Common myeloid progenitor, CD34-positive (primary cell): ENCODE measurements at regions of chr3 and their contacts with region 1.

Region 1: GRCh38 chr3:42190701-42191462 is 75.1 kb downstream of the CCK start:
- DNase-seq: peak; percentile 55 to 76 (median 67)
- H3K4me3 ChIP-seq: no peak overlapping the region
- H3K27ac ChIP-seq: no peak overlapping the region
- H3K4me1 ChIP-seq: peaks cover 4 to 28% (median 18%) of the 10 kb centered on the region in 4 experiments
- H3K27me3 ChIP-seq: no peaks in the 10 kb centered on the region

Region 2: DNA sequence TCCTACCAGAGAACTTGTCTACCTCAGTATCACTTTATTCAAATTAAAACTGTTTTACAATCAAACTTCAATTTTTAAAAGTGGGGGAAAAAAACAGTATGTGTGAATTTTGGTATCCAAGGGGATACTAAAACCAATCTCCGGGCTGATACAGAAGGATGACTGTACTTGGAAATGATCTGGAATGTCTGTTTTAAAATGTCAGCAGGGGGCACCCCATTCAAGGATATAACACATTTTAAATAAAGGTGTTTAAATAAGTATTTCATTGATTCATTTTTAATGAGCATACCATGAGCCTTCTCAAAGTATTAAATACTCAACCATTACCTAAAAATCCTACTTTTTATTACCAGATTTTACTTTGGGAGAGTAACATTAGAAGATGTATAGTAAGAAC is 296.9 kb before region 1 on chr3:
- CTCF ChIA-PET with region 1: interaction called, 17 read pairs
- POLR2A ChIA-PET with region 1: no interaction called
- DNase-seq: peak; percentile 42 to 75 (median 66)
- H3K4me3 ChIP-seq: no peak overlapping the region
- H3K27ac ChIP-seq: no peak overlapping the region
- H3K4me1 ChIP-seq: no peaks in the 10 kb centered on the region
- H3K27me3 ChIP-seq: no peaks in the 10 kb centered on the region

Region 3: DNA sequence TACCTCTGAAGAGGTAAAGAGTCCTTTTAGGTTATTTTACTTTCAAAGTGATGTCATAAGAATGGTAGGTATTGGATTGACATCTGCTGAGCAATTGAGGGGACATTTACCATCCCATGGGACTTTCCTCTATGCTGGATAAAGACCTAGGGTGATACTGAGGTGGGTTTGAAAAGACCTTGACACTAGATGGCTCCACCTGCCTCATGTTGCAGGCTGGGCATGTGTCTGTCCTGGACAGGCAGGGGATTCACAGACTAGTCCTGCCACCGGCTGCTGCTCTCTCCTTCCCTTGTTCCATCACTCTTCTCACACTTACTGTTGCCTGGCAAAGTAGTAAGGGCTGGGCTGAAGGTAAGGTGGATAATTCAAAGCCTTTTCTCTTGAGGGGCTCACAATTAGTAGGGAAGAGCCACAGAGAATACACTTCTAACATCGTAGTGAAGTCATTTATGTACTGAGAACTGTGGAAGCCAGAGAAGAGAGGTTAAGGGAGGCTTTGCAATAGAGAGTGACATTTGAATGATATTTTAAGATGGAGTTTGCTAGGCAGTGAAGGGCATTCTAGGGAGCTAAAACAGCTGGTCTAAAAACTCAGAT is 72.0 kb before region 1 on chr3:
- CTCF ChIA-PET with region 1: interaction called, 122 read pairs
- POLR2A ChIA-PET with region 1: no interaction called
- DNase-seq: peak; percentile 44 to 62 (median 62)
- H3K4me3 ChIP-seq: no peak overlapping the region
- H3K27ac ChIP-seq: peak overlapping the region in 1 of 2 experiments; percentile 11
- H3K4me1 ChIP-seq: peaks cover 6 to 44% (median 33%) of the 10 kb centered on the region in 4 experiments
- H3K27me3 ChIP-seq: no peaks in the 10 kb centered on the region

Region 4: GRCh38 chr3:42179110-42179725 is 11.7 kb before region 1 on chr3:
- CTCF ChIA-PET with region 1: interaction called, 47 read pairs
- POLR2A ChIA-PET with region 1: interaction called, 5 read pairs
- DNase-seq: no peak
- H3K4me3 ChIP-seq: no peak overlapping the region
- H3K27ac ChIP-seq: peak overlapping the region in 1 of 2 experiments; percentile 19
- H3K4me1 ChIP-seq: peaks cover 0 to 2% (median 0%) of the 10 kb centered on the region in 4 experiments
- H3K27me3 ChIP-seq: no peaks in the 10 kb centered on the region

Region 5: GRCh38 chr3:42205800-42206514 is 15.1 kb after region 1 on chr3:
- CTCF ChIA-PET with region 1: interaction called, 15 read pairs
- POLR2A ChIA-PET with region 1: interaction called, 5 read pairs
- DNase-seq: no peak
- H3K4me3 ChIP-seq: no peak overlapping the region
- H3K27ac ChIP-seq: no peak overlapping the region
- H3K4me1 ChIP-seq: no peaks in the 10 kb centered on the region
- H3K27me3 ChIP-seq: no peaks in the 10 kb centered on the region